ENCODE measurements at regions of chr2 and their contacts with region 1.

Region 1: DNA sequence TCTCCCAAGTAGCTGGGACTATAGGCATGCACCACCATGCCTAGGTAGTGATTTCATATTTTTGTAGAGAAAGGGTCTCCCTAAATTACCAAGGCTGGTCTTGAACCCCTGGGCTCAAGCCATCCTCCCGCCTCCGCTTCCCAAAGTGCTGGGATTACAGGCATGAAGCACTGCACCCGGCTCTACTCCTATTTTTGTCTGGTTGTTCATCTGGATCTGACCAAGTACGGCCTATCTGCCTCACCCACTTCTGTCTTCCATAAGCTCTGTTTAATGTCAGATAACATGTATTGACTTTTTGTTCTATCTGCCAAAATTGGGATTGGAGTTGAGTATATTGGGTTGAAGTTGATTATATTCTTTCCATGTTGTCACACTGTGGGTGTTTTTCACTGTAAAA is 198.4 kb downstream of the AFF3 start:
- DNase-seq: no peak
- H3K4me3 ChIP-seq: no peak overlapping the region
- H3K27ac ChIP-seq: no peak overlapping the region
- H3K27me3 ChIP-seq: no peaks in the 10 kb centered on the region
- CTCF ChIP-seq: no peak

Region 2: DNA sequence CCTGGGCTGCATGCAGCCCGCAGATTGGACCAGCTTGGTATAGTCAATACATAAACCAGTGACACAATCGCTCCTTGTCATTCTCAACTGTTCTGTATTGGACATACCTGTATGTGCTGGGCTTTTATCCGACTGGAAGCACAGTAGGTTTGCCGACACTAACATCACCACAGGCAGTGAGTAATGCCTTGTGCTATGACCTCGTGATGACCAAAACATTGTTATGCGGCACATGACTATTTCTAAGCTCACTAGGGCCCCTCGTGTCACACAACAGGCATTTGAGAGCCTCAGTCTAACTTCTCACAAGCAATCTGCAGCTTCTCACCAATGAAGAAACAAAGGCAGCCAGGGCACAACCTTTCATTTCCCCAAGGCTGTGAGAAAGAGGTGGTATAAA is 122.4 kb before region 1 on chr2:
- CTCF ChIA-PET with region 1: no interaction called
- POLR2A ChIA-PET with region 1: no interaction called
- DNase-seq: peak; percentile 30
- H3K4me3 ChIP-seq: no peak overlapping the region
- H3K27ac ChIP-seq: peak overlapping the region; percentile 59
- H3K27me3 ChIP-seq: no peaks in the 10 kb centered on the region
- CTCF ChIP-seq: no peak

Region 3: DNA sequence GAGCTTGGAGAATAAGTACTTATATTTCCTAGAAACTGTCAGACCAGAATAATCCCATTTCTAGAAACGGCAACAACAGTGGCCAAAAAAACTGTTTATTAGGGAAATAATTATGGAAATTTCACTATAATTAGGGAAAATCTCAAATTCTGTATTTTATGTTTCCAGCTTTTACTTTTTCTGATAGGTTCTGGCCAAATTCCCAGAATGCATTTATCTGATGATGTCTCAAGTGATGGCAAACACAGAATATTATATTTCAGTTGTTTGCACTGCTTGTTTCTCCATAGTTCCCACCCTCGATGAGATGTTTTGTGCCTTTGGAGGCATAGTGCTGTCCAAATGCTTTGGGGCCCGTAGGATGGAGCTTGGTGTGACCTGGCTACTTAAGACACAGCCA is 131.5 kb after region 1 on chr2:
- CTCF ChIA-PET with region 1: no interaction called
- POLR2A ChIA-PET with region 1: interaction called, 10 read pairs
- DNase-seq: no peak
- H3K4me3 ChIP-seq: no peak overlapping the region
- H3K27ac ChIP-seq: no peak overlapping the region
- H3K27me3 ChIP-seq: no peaks in the 10 kb centered on the region
- CTCF ChIP-seq: no peak